ENCODE measurements at regions of chrX and their contacts with region 1.

Region 1: DNA sequence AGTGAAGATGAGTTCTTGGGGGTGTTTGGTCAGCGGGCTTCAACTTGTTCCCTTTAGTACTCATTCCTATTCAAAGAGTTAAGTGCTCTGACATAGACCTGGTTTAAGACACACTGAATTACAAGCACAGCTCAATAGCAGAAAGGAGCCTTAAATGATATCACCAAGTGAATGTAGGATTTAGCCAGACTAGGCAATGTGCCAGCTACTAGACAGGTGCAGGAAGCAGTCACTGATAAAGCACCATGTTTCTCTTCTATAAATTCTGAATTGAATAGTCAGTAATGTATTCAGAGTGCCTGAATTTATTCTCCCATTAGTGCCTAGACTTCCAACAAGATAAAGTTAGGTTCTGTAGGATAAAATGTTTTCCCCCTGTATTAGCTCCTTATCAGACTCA is 63.6 kb downstream of the ASB9 start:
- DNase-seq: no peak
- ATAC-seq: no peak
- H3K4me3 Mint-ChIP-seq: no peak overlapping the region
- H3K27ac Mint-ChIP-seq: no peak overlapping the region
- H3K4me1 Mint-ChIP-seq: peaks cover 26% of the 10 kb centered on the region
- H3K27me3 Mint-ChIP-seq: no peaks in the 10 kb centered on the region

Region 2: DNA sequence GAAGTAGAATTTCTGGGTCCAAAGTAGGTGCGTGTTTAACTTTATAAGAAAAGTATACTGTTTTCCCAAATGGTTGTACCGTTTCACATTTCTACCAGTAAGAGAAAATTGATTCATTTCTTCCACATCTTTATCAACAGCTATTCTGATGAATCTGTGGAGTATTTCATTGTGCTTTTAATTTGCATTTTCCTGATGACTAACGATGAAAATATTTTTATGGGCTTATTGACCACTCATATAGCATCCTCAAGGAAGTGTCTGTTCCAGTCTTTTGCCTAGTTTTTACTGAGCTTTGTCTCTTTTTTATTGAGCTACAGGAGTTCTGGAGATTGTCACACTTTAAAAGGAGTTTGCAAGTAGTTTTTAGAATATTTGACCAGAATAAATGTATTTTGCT is 29.0 kb before region 1 on chrX:
- POLR2A ChIA-PET with region 1: interaction called, 11 read pairs
- DNase-seq: no peak
- ATAC-seq: no peak
- H3K4me3 Mint-ChIP-seq: no peak overlapping the region
- H3K27ac Mint-ChIP-seq: no peak overlapping the region
- H3K4me1 Mint-ChIP-seq: no peaks in the 10 kb centered on the region
- H3K27me3 Mint-ChIP-seq: no peaks in the 10 kb centered on the region

Region 3: DNA sequence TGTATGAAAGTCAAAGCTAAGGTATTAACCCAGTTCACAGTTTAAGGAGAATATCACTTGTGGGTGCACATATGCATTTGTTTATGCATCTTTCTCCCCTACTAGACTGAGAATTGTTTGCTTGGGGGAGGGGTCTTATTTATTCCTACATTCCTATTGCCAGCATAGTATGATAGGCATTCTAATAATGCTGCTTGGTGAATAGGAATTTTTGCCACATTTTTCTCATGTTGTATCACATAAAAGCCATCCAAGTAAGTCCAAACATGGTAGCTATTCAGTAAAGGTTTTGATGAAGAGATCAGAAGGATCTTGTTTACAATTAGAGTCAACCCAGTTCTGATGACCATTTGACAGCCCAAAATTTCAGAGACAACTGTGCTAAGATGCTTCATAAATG is 15.0 kb after region 1 on chrX:
- POLR2A ChIA-PET with region 1: no interaction called
- DNase-seq: no peak
- ATAC-seq: no peak
- H3K4me3 Mint-ChIP-seq: no peak overlapping the region
- H3K27ac Mint-ChIP-seq: no peak overlapping the region
- H3K4me1 Mint-ChIP-seq: no peaks in the 10 kb centered on the region
- H3K27me3 Mint-ChIP-seq: no peaks in the 10 kb centered on the region